ENCODE measurements at regions of chr7 and their contacts with region 1.

Region 1: GRCh38 chr7:104848138-104848990 is 165.6 kb upstream of the KMT2E start:
- DNase-seq: peak in 1 of 2 experiments; percentile 50
- H3K4me3 ChIP-seq: no peak overlapping the region
- H3K27ac ChIP-seq: no peak overlapping the region
- H3K4me1 ChIP-seq: no peaks in the 10 kb centered on the region
- H3K27me3 ChIP-seq: peaks cover 67% of the 10 kb centered on the region
- CTCF ChIP-seq: peak; percentile 97

Region 2: DNA sequence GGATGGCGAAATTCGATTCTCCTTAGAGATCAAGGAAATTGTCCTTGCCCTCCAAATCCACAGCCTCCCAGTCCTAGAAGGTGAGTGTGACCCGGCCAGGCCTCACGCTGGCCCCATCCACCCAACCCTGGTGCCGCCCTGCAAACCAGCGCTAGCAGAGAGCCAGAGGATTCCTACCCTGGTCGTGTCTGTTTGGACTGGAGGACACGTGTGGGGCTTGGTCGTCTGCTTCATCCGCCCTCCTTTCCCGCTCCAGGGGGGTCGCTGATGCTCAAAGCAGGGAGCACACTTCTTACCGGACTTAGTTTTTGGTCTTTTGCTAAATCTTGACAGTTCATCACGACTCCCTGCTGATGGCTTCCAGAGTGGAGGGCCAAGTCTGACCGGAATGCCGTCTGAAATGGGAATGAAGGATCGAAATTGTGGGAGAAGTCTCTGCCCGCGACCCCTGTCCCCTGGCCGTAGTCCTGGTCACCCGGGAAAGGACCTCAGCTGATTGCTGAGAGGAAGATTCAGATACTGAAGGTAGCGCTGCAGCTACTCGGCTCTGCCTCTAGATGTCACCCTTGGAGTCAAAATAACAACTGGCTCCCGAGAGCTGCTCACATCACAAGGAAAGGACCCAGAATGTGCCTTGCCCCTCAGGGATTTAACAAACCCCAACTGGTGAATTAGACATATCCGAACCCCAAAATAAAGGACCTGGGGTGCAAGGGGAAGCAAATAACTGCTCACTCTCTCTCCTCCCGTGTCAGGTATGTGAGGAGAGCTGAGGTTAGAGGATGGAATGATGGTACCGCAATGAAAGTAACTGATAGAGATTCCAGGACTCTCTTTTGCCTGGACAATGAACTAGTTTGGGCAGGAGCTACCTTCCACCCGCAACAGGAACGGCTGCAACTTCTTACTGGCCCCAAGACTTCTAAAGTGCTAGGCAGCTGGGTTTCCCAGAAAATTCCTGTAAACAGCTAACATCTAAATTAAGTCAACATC is 617.0 kb before region 1 on chr7:
- CTCF ChIA-PET with region 1: interaction called, 4 read pairs
- POLR2A ChIA-PET with region 1: no interaction called
- intact Hi-C with region 1: loop called (anchors 1 kb)
- DNase-seq: peak; percentile 35 to 37
- H3K4me3 ChIP-seq: no peak overlapping the region
- H3K27ac ChIP-seq: no peak overlapping the region
- H3K4me1 ChIP-seq: no peaks in the 10 kb centered on the region
- H3K27me3 ChIP-seq: peaks cover 2% of the 10 kb centered on the region; the same call in 1 of the 2 replicates
- CTCF ChIP-seq: peak; percentile 73

Region 3: DNA sequence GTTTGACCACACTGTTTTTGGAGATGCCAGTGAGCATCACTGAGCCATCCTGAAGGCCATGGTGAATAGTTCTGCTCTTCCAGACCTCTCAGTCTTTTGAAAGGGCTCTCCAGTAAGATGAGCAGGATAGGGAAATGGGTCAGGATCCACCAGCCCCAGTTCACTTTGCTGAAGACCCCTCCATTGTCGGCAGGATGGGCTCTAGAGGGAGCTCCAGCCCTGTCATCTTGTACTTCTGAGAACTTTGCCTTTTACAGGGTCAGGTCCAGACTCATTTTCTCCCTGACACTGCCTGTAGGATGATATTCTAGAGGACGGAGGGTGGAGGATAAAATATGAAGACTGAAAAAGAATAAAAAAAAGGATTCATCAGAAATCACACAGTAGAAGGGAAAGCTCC is 506.8 kb before region 1 on chr7:
- CTCF ChIA-PET with region 1: no interaction called
- POLR2A ChIA-PET with region 1: no interaction called
- intact Hi-C with region 1: loop called (anchors 5 kb)
- DNase-seq: no peak
- H3K4me3 ChIP-seq: no peak overlapping the region
- H3K27ac ChIP-seq: no peak overlapping the region
- H3K4me1 ChIP-seq: no peaks in the 10 kb centered on the region
- H3K27me3 ChIP-seq: no peaks in the 10 kb centered on the region; the same call in 1 of the 2 replicates
- CTCF ChIP-seq: no peak

Region 4: GRCh38 chr7:104700336-104700735 is 148.0 kb before region 1 on chr7:
- CTCF ChIA-PET with region 1: no interaction called
- POLR2A ChIA-PET with region 1: no interaction called
- intact Hi-C with region 1: no loop called
- DNase-seq: no peak
- H3K4me3 ChIP-seq: no peak overlapping the region
- H3K27ac ChIP-seq: no peak overlapping the region
- H3K4me1 ChIP-seq: no peaks in the 10 kb centered on the region
- H3K27me3 ChIP-seq: no peaks in the 10 kb centered on the region
- CTCF ChIP-seq: no peak

Measured in PC-9 (cell line).